ENCODE measurements at regions of chr6 and their contacts with region 1.

Region 1: DNA sequence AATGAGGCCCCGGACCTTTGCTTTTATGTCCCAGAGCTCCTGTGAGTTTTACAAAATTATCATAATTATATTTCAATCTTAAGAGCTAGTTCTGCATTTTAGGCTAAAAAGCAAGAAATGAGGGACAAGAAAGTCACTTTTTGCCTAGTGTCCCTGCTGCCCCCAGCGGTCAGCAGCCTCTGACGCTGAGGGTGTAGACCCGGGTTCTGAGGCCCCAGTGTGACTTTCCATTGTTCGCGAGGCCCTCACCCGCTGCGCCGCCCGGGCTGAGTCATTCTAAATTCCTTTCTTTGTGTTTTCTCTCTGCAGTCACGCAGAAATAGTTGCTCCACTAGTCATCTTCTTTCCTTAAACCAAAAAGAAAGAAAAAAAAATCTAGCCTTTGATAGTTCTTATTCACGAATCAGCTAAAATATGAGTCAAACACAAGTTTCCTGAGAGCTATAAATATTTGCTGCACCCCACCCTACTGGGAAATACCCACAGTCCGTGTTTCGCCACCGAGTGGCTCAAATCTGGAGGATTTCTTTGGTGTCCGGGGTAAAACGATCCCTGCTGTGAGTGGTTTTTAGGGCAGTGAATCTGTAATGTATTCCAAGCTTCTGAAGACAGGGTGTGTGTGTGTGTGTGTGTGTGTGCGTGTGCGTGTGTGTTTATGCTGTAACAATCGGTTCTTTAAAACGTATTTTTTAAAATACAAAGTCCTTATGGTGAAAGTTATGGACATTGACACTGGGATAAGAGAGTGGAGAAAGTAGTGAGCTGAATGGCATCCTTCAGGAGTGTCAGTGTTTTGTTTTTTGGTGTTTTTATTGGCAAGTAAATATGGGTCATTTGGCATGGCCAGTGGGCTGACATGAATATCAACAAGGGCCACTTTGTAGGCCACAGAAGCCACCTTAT is 59.7 kb upstream of the EEF1A1 start:
- DNase-seq: peak; percentile 97
- H3K4me3 ChIP-seq: peak overlapping the region; percentile 60
- H3K27ac ChIP-seq: peak overlapping the region; percentile 99
- H3K4me1 ChIP-seq: peaks cover 61% of the 10 kb centered on the region
- H3K27me3 ChIP-seq: no peaks in the 10 kb centered on the region
- CTCF ChIP-seq: peak; percentile 56; the same call in 1 of the 2 replicates

Region 2: GRCh38 chr6:72950114-72950860 is 630.2 kb before region 1 on chr6:
- CTCF ChIA-PET with region 1: no interaction called
- POLR2A ChIA-PET with region 1: interaction called, 25 read pairs
- intact Hi-C with region 1: no loop called
- DNase-seq: peak; percentile 40 to 87
- H3K4me3 ChIP-seq: peak overlapping the region; percentile 34
- H3K27ac ChIP-seq: peak overlapping the region; percentile 75
- H3K4me1 ChIP-seq: peaks cover 46% of the 10 kb centered on the region
- H3K27me3 ChIP-seq: no peaks in the 10 kb centered on the region
- CTCF ChIP-seq: no peak

Region 3: DNA sequence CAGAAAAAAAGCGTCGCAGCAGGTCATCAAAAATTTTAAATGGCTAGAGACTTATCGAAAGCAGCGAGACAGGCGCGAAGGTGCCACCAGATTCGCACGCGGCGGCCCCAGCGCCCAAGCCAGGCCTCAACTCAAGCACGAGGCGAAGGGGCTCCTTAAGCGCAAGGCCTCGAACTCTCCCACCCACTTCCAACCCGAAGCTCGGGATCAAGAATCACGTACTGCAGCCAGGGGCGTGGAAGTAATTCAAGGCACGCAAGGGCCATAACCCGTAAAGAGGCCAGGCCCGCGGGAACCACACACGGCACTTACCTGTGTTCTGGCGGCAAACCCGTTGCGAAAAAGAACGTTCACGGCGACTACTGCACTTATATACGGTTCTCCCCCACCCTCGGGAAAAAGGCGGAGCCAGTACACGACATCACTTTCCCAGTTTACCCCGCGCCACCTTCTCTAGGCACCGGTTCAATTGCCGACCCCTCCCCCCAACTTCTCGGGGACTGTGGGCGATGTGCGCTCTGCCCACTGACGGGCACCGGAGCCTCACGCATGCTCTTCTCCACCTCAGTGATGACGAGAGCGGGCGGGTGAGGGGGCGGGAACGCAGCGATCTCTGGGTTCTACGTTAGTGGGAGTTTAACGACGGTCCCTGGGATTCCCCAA is 59.7 kb before region 1 on chr6 and contains the start of gene EEF1A1:
- CTCF ChIA-PET with region 1: interaction called, 4 read pairs
- POLR2A ChIA-PET with region 1: interaction called, 29 read pairs
- intact Hi-C with region 1: loop called (anchors 1 kb)
- DNase-seq: peak; percentile 98 to 99
- H3K4me3 ChIP-seq: peak within 1 kb of the TSS; percentile 89
- H3K27ac ChIP-seq: peak within 1 kb of the TSS; percentile 100
- H3K4me1 ChIP-seq: peaks cover 26% of the 10 kb centered on the region
- H3K27me3 ChIP-seq: no peaks in the 10 kb centered on the region
- CTCF ChIP-seq: no peak
- total RNA-seq, gene EEF1A1: 10,581 and 12,059 TPM in 2 replicates

Region 4: DNA sequence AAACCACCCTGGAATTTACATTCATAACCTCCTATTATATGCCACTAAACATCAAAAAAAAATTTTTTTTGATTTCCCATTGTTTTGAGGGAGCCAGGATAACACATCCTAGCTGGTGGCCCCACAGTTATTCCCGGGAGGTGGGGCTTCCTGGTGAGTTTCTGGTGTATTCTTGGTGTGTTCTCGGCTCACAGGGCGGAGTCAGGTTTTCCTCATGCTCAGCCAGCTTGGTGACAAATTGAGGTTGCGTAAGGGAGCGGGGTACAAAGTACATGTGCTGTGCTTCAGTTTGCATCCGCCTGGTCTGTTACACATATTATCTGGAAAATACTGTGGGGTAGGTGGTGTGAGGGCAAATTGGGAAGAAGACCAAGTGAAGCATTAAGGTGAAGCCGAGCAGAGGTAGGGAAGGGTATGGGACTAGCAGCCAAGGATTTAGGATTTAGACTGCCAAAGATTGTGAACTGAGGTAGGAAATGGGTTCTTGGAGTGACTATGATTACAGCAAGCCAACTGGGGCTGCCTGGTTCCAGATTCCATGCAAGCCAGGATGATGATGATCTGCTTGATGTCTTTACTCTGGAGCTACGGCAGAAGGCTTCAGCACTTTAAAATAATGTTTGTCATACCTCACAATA is 13.4 kb before region 1 on chr6:
- CTCF ChIA-PET with region 1: no interaction called
- POLR2A ChIA-PET with region 1: interaction called, 13 read pairs
- intact Hi-C with region 1: loop called (anchors 1 kb)
- DNase-seq: peak; percentile 55 to 75
- H3K4me3 ChIP-seq: no peak overlapping the region
- H3K27ac ChIP-seq: no peak overlapping the region
- H3K4me1 ChIP-seq: peaks cover 22% of the 10 kb centered on the region
- H3K27me3 ChIP-seq: no peaks in the 10 kb centered on the region
- CTCF ChIP-seq: no peak

Region 5: DNA sequence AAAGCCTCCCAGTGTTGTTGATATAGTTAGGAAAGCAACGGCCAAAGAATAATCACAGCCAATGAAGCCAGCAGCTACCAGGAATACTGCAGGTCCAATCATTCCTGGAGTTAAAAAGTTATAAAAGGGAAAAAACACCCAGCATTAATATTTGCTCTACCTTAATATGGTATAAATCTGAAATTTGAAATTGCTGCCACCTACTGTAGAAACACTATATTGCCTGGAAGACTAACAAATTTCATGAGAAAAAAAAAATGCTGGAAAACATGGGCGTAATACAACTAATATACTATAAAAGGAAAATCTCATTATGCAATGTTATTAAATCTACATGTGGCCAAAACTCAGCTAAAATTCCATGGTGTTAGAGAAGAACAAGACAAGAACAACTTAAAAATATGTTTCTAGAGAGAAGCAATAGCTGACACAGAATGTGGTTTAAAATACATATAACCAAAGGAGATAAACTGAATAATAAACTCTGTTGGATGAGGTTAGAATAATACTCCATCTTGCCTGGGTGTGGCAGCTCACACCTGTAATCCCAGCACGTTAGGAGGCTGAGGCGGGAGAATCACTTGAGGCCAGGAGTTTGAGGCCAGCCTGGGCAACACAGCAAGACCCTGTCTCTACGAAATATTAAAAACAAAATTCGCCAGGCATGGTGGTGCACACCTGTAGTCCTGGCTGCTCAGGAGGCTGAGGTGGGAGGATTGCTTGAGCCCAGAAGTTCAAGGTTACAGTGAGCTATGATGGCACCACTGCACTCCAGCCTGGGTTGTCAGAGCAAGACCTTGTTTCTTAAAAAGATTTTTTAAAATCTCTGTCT is 30.2 kb after region 1 on chr6:
- CTCF ChIA-PET with region 1: interaction called, 3 read pairs
- POLR2A ChIA-PET with region 1: interaction called, 3 read pairs
- intact Hi-C with region 1: loop called (anchors 1 kb)
- DNase-seq: peak in 1 of 2 experiments; percentile 56
- H3K4me3 ChIP-seq: no peak overlapping the region
- H3K27ac ChIP-seq: peak overlapping the region; percentile 42
- H3K4me1 ChIP-seq: peaks cover 10% of the 10 kb centered on the region; the same call in 1 of the 2 replicates
- H3K27me3 ChIP-seq: no peaks in the 10 kb centered on the region
- CTCF ChIP-seq: peak; percentile 77